ENCODE measurements at regions of chr21 and their contacts with region 1.

Region 1: GRCh38 chr21:38758501-38759214 is 47.1 kb upstream of the ETS2 start:
- DNase-seq: no peak
- ATAC-seq: no peak
- H3K4me3 ChIP-seq: no peak overlapping the region
- H3K4me3 Mint-ChIP-seq: no peak overlapping the region
- H3K27ac ChIP-seq: no peak overlapping the region
- H3K27ac Mint-ChIP-seq: no peak overlapping the region
- H3K4me1 ChIP-seq: peaks cover 5% of the 10 kb centered on the region
- H3K4me1 Mint-ChIP-seq: peaks cover 8% of the 10 kb centered on the region
- H3K27me3 ChIP-seq: no peaks in the 10 kb centered on the region
- H3K27me3 Mint-ChIP-seq: no peaks in the 10 kb centered on the region
- CTCF ChIP-seq: no peak

Region 2: GRCh38 chr21:38075831-38076587 is 682.6 kb before region 1 on chr21:
- CTCF ChIA-PET with region 1: no interaction called
- POLR2A ChIA-PET with region 1: no interaction called
- intact Hi-C with region 1: no loop called
- DNase-seq: no peak
- ATAC-seq: no peak
- H3K4me3 ChIP-seq: no peak overlapping the region
- H3K4me3 Mint-ChIP-seq: no peak overlapping the region
- H3K27ac ChIP-seq: no peak overlapping the region
- H3K27ac Mint-ChIP-seq: no peak overlapping the region
- H3K4me1 ChIP-seq: no peaks in the 10 kb centered on the region
- H3K4me1 Mint-ChIP-seq: no peaks in the 10 kb centered on the region
- H3K27me3 ChIP-seq: no peaks in the 10 kb centered on the region
- H3K27me3 Mint-ChIP-seq: peaks cover 6% of the 10 kb centered on the region
- CTCF ChIP-seq: no peak

Region 3: DNA sequence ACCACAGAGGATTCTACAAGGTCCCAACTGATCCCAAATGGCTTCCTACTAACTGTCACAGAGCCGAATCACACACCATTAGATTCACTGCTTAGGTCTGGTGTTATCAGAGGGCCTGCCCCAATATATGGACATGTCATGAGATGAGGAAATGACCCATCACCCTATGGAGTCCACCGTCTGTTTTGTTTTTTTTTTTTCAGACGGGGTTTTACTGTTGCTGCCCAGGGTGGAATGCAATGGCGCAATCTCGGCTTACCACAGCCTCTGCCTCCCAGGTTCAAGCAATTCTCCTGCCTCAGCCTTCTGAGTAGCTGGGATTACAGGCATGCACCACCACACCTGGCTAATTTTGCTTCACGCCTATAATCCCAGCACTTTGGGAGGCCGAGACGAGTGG is 36.7 kb before region 1 on chr21:
- CTCF ChIA-PET with region 1: no interaction called
- POLR2A ChIA-PET with region 1: no interaction called
- intact Hi-C with region 1: no loop called
- DNase-seq: peak in 2 of 14 experiments; percentile 6 to 19
- ATAC-seq: no peak
- H3K4me3 ChIP-seq: no peak overlapping the region
- H3K4me3 Mint-ChIP-seq: no peak overlapping the region
- H3K27ac ChIP-seq: no peak overlapping the region
- H3K27ac Mint-ChIP-seq: no peak overlapping the region
- H3K4me1 ChIP-seq: no peaks in the 10 kb centered on the region
- H3K4me1 Mint-ChIP-seq: no peaks in the 10 kb centered on the region
- H3K27me3 ChIP-seq: no peaks in the 10 kb centered on the region
- H3K27me3 Mint-ChIP-seq: no peaks in the 10 kb centered on the region
- CTCF ChIP-seq: no peak

Region 4: GRCh38 chr21:38773099-38774061 is 14.7 kb after region 1 on chr21:
- CTCF ChIA-PET with region 1: no interaction called
- POLR2A ChIA-PET with region 1: interaction called, 4 read pairs
- intact Hi-C with region 1: loop called in 1 of 2 experiments (anchors 1 kb)
- DNase-seq: peak in 1 of 14 experiments; percentile 40
- ATAC-seq: no peak
- H3K4me3 ChIP-seq: no peak overlapping the region
- H3K4me3 Mint-ChIP-seq: no peak overlapping the region
- H3K27ac ChIP-seq: no peak overlapping the region
- H3K27ac Mint-ChIP-seq: no peak overlapping the region
- H3K4me1 ChIP-seq: peaks cover 14% of the 10 kb centered on the region
- H3K4me1 Mint-ChIP-seq: peaks cover 10% of the 10 kb centered on the region
- H3K27me3 ChIP-seq: peaks cover 0 to 2% of the 10 kb centered on the region in 2 experiments
- H3K27me3 Mint-ChIP-seq: no peaks in the 10 kb centered on the region
- CTCF ChIP-seq: no peak

Measured in CD4-positive, alpha-beta T cell (primary cell).